GM10248 (cell line): ENCODE measurements at regions of chr9 and their contacts with region 1.

Region 1: DNA sequence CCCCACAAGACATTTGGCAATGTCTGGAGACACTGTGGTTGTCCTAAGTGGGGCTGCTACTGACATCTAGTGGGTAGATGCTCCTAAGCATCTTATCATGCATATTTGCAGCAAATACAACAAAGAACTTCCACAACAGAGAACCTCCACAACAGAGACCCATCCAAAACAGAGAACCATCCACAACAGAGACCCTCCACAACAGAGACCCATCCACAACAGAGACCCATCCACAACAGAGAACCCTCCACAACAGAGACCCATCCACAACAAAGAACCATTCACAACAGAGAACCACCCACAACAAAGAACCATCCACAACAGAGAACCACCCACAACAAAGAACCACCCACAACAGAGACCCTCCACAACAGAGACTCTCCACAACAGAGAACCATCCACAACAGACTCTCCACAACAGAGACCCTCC is 32.8 kb downstream of the ARPC5L start:
- DNase-seq: no peak
- CTCF ChIP-seq: peak; percentile 59

Region 2: DNA sequence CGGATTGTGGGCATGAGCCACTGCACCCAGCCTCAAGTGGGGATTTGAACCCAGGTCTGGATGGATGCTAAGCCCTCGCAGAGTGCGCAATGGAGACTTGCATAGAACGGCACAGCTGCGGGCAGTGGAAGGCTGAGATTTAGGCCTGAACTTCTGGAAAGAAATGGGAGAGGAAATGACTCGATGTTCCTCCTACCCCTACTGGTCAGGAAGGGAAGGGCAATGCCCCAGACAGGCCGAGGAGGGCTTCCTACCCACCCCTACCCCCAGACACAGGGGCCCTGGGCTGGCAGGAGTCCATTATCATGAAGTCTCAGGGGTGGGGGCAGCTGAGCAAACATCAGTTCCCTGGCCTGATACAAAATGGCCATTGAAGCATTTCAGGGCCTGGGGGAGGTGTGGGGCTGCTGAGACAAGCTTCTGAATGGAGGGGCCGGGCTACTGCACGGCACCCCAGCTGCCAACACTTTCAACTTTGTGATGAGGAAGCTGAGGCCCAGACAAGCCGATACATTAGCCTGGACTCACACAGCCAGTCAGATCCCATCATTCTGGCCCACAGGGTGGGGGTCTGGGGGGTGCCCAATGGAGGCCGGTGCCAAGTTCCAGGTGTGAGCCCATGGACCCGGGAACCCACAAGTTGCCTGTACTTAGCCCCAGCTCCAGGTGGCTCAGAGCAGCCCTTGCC is 55.0 kb before region 1 on chr9:
- CTCF ChIA-PET with region 1: no interaction called
- POLR2A ChIA-PET with region 1: no interaction called
- DNase-seq: no peak
- CTCF ChIP-seq: no peak

Region 3: DNA sequence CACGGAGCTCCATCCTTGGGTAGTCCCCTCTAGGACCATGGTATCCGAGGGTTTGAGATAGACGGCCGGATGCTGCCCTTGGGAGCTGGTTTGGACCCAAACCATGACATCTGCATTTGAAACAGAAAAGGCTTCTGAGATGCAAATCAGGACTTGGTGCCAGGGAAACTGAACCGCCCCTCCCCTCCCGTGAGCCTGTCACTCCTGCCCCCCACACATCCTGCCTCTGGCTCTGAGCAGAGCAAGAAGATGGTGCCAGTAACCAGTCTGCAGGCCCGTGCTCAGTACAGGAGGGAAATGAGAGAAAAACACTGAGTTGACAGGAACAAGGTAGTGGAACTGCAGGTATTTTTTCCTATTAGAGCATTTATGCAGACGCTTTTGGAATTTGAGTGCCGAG is 14.3 kb before region 1 on chr9:
- CTCF ChIA-PET with region 1: interaction called, 15 read pairs
- POLR2A ChIA-PET with region 1: no interaction called
- DNase-seq: no peak
- CTCF ChIP-seq: no peak

Region 4: DNA sequence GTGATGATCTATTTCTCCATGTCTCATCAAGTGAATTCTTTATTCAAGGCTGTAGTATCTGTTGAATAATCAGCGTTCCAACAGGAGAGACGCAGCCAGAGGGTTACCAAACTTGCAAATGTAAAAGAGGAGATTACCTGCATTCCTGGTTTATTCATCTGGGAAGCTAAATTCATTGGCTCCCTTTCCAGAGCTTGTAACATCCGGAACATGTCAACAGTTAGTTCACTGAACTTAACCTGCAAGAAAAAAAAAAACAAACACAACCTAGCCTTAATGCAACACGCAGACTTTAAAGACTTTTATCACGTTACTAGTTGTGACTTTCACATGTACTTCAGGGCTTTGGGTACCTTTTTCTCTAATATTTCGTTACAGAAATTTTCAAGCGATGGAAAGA is 108.6 kb after region 1 on chr9:
- CTCF ChIA-PET with region 1: no interaction called
- POLR2A ChIA-PET with region 1: no interaction called
- DNase-seq: no peak
- CTCF ChIP-seq: no peak

Region 5: GRCh38 chr9:125061391-125061790 is 166.6 kb after region 1 on chr9:
- CTCF ChIA-PET with region 1: no interaction called
- POLR2A ChIA-PET with region 1: no interaction called
- DNase-seq: no peak
- CTCF ChIP-seq: no peak

Region 6: GRCh38 chr9:125172031-125172755 is 277.4 kb after region 1 on chr9:
- CTCF ChIA-PET with region 1: no interaction called
- POLR2A ChIA-PET with region 1: no interaction called
- DNase-seq: no peak
- CTCF ChIP-seq: no peak